Panc1 (cell line): ENCODE measurements at regions of chr7 and their contacts with region 1.

Region 1: DNA sequence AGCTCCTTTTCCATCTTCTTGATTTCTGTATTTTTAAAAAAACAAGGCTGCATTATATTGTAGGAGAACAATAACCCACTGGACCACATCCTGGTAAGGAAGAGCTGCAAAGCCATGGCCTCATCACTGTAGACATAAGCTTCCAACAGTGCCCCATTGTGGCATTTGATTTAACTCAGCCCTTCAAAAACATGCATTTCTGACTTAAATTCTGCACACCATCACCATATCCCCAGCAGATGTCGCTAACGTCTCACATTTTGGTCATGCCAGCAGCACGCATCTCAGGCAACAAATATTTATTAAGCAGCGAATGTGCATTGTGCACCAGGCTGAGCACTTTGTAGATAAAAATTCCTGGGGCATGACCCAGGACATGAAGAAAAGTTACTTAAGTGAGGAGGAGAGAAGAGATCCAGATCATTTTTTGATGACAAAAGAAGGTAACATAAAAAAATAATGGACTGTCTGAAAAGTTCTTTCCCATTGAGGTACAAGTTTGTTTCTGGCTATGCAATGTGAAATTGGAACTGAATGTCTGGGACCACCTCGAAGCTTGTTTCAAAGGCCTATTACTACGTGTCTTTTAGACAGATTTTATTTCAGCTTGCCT is 164.6 kb upstream of the CDCA7L start:
- DNase-seq: peak; percentile 78
- ATAC-seq: peak; percentile 92
- H3K4me3 ChIP-seq: no peak overlapping the region
- H3K27ac ChIP-seq: no peak overlapping the region
- H3K4me1 ChIP-seq: no peaks in the 10 kb centered on the region
- H3K27me3 ChIP-seq: peaks cover 4% of the 10 kb centered on the region; the same call in 1 of the 2 replicates
- CTCF ChIP-seq: peak; percentile 88

Region 2: GRCh38 chr7:22295402-22296264 is 185.3 kb after region 1 on chr7:
- CTCF ChIA-PET with region 1: no interaction called
- POLR2A ChIA-PET with region 1: no interaction called
- in situ Hi-C with region 1: no loop called
- intact Hi-C with region 1: loop called (anchors 10 kb)
- DNase-seq: no peak
- ATAC-seq: no peak
- H3K4me3 ChIP-seq: no peak overlapping the region
- H3K27ac ChIP-seq: no peak overlapping the region
- H3K4me1 ChIP-seq: no peaks in the 10 kb centered on the region
- H3K27me3 ChIP-seq: no peaks in the 10 kb centered on the region
- CTCF ChIP-seq: no peak

Region 3: DNA sequence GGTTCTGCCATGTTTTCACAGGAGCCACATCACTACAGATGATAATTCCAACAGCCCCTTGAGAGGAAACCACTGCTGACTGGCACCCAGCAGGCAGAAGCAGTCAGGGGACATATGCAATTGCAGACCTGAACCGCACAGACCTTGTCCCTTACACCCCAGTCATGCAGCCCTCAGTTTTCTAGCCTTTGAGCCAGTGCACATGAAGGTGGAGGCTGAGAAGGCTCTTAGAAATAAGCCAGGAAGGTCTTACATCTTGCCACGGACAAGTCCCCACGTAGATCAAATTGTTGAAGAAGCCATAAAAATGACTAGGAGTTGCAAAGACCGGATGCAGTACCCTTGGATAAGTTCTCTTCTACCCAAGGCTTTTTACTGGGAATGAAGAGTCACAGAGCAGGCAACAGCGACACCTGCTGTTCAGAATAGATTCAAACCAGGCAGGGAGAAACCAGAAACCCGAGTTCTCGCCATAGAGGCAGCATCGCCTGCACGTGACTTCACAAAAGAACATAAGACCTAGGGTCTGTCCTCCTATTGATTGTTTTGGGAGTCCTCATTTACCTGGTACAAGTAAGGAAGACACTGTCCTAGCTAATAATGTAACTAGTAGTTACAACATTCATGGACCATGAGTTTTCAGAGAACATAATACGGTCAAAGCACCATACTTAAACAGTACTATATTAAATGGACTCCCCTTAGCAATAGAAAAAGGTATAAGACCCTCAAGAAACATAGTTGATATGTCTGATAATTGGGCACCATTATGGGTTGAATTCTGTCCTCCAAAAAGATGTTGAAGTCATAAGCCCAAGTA is 378.5 kb after region 1 on chr7:
- CTCF ChIA-PET with region 1: interaction called, 4 read pairs
- POLR2A ChIA-PET with region 1: no interaction called
- in situ Hi-C with region 1: no loop called
- intact Hi-C with region 1: loop called (anchors 1 kb)
- DNase-seq: peak; percentile 60
- ATAC-seq: peak; percentile 93
- H3K4me3 ChIP-seq: no peak overlapping the region
- H3K27ac ChIP-seq: no peak overlapping the region
- H3K4me1 ChIP-seq: no peaks in the 10 kb centered on the region
- H3K27me3 ChIP-seq: no peaks in the 10 kb centered on the region
- CTCF ChIP-seq: peak; percentile 95

Region 4: DNA sequence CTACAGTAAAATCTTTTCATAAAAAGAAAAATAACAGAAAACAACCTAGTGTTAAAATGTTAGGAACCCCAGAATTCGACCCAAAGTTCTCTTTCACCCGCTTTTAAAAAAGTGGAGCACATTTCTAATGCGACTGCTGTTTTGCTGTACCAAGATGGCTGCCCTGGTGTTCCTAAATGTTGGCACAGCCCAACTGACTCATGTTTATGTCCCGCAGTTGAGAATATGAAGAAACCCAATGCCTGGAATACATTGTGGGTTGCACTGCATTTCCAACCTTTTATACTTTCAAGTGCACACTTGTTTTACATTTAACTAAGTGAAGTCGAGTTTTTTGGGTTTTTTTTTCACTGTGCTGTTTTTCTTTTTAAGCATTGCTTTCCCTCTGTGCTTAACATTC is 388.7 kb after region 1 on chr7:
- CTCF ChIA-PET with region 1: interaction called, 4 read pairs
- POLR2A ChIA-PET with region 1: no interaction called
- in situ Hi-C with region 1: no loop called
- intact Hi-C with region 1: loop called (anchors 1 kb)
- DNase-seq: no peak
- ATAC-seq: no peak
- H3K4me3 ChIP-seq: no peak overlapping the region
- H3K27ac ChIP-seq: no peak overlapping the region
- H3K4me1 ChIP-seq: no peaks in the 10 kb centered on the region
- H3K27me3 ChIP-seq: no peaks in the 10 kb centered on the region
- CTCF ChIP-seq: no peak